CD14-positive monocyte (primary cell): ENCODE measurements at regions of chr1 and their contacts with region 1.

Region 1: GRCh38 chr1:37859507-37860345 is at the start of gene MTF1:
- DNase-seq: peak; percentile 97 to 99 (median 99)
- H3K4me3 ChIP-seq: peak within 1 kb of the TSS; percentile 74 to 97 (median 95)
- H3K4me3 Mint-ChIP-seq: peak within 1 kb of the TSS; percentile 95
- H3K27ac ChIP-seq: peak within 1 kb of the TSS; percentile 88 to 99
- H3K27ac Mint-ChIP-seq: peak within 1 kb of the TSS; percentile 97 to 99 (median 98)
- H3K4me1 ChIP-seq: peaks cover 45 to 54% of the 10 kb centered on the region in 2 donors
- H3K4me1 Mint-ChIP-seq: peaks cover 44% of the 10 kb centered on the region
- H3K27me3 ChIP-seq: no peaks in the 10 kb centered on the region
- H3K27me3 Mint-ChIP-seq: no peaks in the 10 kb centered on the region
- CTCF ChIP-seq: peak; percentile 92
- polyA plus RNA-seq, gene MTF1: 17.1 to 41.0 (median 29.6) TPM

Region 2: GRCh38 chr1:37831809-37832208 is 27.9 kb before region 1 on chr1:
- intact Hi-C with region 1: loop called in 1 of 2 experiments (anchors 2 kb)
- DNase-seq: no peak
- H3K4me3 ChIP-seq: no peak overlapping the region
- H3K4me3 Mint-ChIP-seq: no peak overlapping the region
- H3K27ac ChIP-seq: no peak overlapping the region
- H3K27ac Mint-ChIP-seq: peak overlapping the region in 1 of 7 donors; percentile 15
- H3K4me1 ChIP-seq: peaks cover 0 to under 1% of the 10 kb centered on the region in 2 donors
- H3K4me1 Mint-ChIP-seq: peaks cover 4% of the 10 kb centered on the region
- H3K27me3 ChIP-seq: no peaks in the 10 kb centered on the region
- H3K27me3 Mint-ChIP-seq: no peaks in the 10 kb centered on the region
- CTCF ChIP-seq: no peak